ENCODE measurements at regions of chr7 and their contacts with region 1.

Region 1: DNA sequence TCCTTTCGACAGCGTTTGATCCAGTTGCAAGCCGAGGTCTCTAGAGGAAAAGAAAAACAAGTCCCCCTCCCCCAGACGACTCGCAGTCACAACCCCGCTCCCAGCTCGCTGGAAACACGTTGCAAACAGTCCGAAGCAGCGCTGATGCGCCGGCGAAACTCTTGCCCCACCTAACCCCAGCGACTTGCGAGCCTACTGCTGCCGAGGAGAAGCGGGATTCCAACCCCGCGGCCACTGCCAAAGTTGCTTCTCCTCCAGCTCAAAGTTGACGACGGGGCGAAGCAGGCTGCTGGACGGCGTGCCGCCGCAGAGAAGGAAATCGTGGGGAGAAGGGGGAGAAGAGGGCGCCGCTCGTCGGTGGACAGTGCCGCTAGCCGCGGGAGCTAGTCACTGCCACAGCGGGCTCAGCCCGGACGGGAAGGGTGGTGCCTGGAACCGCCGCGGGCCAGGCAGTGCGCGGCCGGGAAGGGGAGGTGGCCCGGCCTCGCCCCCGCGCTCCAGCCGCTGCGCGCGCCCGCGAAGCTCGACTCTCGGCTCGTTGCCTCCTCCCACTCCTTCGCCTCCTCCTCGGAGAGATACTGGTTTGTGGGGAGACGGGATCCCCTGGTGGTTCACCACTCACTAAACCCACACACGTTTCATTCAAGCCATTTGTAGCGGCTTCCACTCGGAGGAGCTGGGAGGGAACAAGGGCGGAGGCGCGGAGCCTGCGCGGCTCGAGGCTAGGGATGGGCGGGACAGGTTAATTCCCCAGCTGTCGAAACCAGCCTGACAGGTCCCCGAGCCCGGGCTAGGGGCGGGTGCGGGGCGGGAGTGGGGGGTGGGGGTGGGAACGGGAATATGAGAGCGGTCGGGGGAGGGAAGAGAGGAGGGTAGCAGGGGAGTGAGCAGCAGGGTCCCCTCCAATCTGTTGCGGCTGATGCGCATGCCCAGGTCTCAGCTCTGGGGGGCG is at the start of gene GPR37:
- DNase-seq: peak; percentile 54
- H3K4me3 Mint-ChIP-seq: peak within 1 kb of the TSS; percentile 72
- H3K27ac Mint-ChIP-seq: no peak within 1 kb of the TSS
- H3K4me1 Mint-ChIP-seq: peaks cover 15% of the 10 kb centered on the region
- H3K27me3 Mint-ChIP-seq: peaks cover 53% of the 10 kb centered on the region
- total RNA-seq, gene GPR37: not detected

Region 2: GRCh38 chr7:123787220-123788007 is 978.3 kb before region 1 on chr7:
- CTCF ChIA-PET with region 1: no interaction called
- intact Hi-C with region 1: loop called (anchors 5 kb)
- DNase-seq: no peak
- H3K4me3 Mint-ChIP-seq: no peak overlapping the region
- H3K27ac Mint-ChIP-seq: no peak overlapping the region
- H3K4me1 Mint-ChIP-seq: peaks cover 8% of the 10 kb centered on the region
- H3K27me3 Mint-ChIP-seq: no peaks in the 10 kb centered on the region

Measured in activated naive CD4-positive, alpha-beta T cell treated with anti-CD3 and anti-CD28 coated beads for 36 hours (primary cell).